ENCODE measurements at regions of chr10 and their contacts with region 1.

Region 1: DNA sequence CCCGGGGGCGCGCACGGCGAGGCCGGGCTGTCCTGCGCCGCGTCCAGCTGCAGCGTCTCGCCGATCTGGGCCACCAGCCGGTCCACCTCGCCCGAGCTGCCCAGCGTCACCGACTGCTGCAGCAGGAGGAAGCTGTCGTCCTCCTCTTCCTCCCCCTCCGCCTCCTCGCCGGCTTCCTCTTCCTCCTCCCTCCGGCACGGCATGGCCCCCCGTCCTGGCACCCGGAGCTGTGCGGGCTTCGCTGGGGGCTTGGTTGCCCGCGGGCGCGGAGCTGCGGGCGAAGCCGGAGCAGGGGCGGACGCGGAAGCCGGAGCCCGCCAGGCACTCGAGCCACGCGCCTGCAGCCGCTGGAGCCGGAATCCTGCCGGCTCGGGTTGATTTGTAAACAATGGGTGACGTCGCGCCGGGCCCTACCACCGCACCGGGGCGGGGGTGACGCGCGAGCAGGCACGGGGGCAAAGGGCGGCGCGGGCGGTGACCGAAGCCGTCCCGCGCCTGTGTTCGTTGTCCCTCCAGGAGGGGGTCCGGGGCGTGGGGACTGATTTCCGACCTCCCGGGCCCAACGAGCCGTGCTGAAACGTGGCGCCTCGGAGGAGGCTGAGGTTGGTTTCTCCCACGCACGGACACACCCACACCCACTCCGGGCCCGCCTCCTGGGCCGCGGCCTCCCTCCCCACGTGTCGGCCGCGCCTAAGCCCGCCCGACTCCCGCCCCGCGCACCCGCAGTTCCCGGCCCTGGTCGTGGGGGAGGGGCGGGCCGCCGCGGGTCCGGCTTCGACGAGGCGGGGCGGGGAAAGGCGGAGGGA is at the start of gene FRAT2:
- DNase-seq: peak; percentile 92 to 96
- ATAC-seq: peak; percentile 95 to 97 (median 96)
- H3K4me3 ChIP-seq: peak within 1 kb of the TSS; percentile 83
- H3K27ac ChIP-seq: peak within 1 kb of the TSS; percentile 98
- H3K4me1 ChIP-seq: peaks cover 16% of the 10 kb centered on the region
- H3K27me3 ChIP-seq: no peaks in the 10 kb centered on the region
- CTCF ChIP-seq: no peak
- total RNA-seq, gene FRAT2: 5.3 to 11.1 (median 6.6) TPM

Region 2: GRCh38 chr10:97278491-97278989 is 56.0 kb before region 1 on chr10:
- intact Hi-C with region 1: loop called (anchors 2 kb)
- DNase-seq: no peak
- ATAC-seq: peak; percentile 78 to 96 (median 84)
- H3K4me3 ChIP-seq: peak overlapping the region; percentile 1
- H3K27ac ChIP-seq: peak overlapping the region; percentile 57
- H3K4me1 ChIP-seq: peaks cover 17% of the 10 kb centered on the region
- H3K27me3 ChIP-seq: no peaks in the 10 kb centered on the region
- CTCF ChIP-seq: peak; percentile 77

Region 3: DNA sequence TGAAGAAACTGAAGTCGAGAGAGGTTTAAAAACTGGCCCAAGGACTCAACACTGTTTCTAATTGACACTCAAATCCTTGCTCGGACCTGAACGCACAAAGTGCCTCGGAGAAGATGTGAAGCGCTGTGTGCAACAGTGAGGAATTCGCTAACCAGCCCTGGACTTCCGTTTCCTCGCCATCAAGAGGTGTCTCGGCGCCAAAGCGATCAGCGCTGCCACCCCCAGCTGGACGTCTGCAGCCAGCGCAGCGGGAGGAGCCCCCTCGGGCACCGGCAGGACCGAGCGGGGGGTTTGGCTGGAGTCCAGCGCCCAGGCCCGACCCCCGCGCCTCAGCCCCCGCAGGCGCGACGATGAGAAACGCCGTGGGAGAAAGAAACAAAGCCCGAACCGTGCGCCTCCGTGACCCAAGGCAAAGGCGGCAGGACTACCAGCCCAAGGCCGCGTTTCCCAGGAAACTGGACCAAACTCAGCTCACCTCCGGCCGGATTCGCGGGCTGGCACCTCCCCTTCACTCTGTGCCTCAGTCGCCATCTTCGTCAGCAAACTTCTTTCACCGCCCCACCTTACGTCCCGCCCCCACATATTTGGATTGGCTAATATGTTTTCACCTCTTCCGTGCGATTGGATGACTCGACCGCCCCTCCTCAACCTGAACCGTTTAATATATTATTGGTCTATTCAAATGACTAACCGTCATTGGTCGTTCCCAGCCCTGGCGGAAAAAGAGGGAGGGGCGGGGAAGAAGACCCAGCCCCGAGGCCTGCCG is 42.3 kb before region 1 on chr10 and contains the start of gene ARHGAP19:
- intact Hi-C with region 1: loop called in 1 of 2 experiments (anchors 5 kb)
- DNase-seq: peak; percentile 94 to 96
- ATAC-seq: peak; percentile 99 to 100 (median 100)
- H3K4me3 ChIP-seq: peak within 1 kb of the TSS; percentile 82
- H3K27ac ChIP-seq: peak within 1 kb of the TSS; percentile 86
- H3K4me1 ChIP-seq: peaks cover 8% of the 10 kb centered on the region
- H3K27me3 ChIP-seq: no peaks in the 10 kb centered on the region
- CTCF ChIP-seq: no peak
- total RNA-seq, gene ARHGAP19: 1.2 to 3.9 (median 1.8) TPM